MCF 10A (cell line): ENCODE measurements at regions of chr22 and their contacts with region 1.

Region 1: DNA sequence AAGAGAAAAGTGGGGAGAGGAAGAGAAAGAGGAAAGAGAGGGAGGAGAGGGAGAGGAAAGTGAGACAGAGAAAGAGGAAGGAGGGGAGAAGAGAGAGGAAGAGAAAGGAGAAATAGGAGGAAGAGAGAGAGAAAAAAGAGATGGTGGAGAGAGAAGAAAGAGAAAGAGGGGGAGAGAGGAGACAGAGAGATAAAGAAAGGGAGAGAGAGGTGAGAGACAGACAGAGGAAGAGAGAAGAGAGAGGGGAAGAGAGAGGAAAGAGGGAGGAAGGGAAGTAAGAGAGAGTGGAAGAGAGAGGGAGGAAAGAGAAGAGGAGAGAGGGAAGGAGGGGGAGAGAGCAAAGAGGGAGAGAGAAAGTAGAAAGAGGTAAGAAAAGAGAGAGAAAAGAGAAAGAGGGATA is 9.4 kb upstream of the SEZ6L start:
- DNase-seq: no peak
- H3K4me3 Mint-ChIP-seq: no peak overlapping the region
- H3K27ac Mint-ChIP-seq: no peak overlapping the region
- H3K4me1 Mint-ChIP-seq: no peaks in the 10 kb centered on the region
- H3K27me3 Mint-ChIP-seq: peaks cover 62% of the 10 kb centered on the region
- CTCF ChIP-seq: no peak

Region 2: GRCh38 chr22:25747245-25747944 is 412.5 kb before region 1 on chr22:
- CTCF ChIA-PET with region 1: no interaction called
- POLR2A ChIA-PET with region 1: no interaction called
- intact Hi-C with region 1: no loop called
- DNase-seq: peak; percentile 99
- H3K4me3 Mint-ChIP-seq: peak overlapping the region; percentile 40
- H3K27ac Mint-ChIP-seq: peak overlapping the region; percentile 76
- H3K4me1 Mint-ChIP-seq: peaks cover 43% of the 10 kb centered on the region
- H3K27me3 Mint-ChIP-seq: no peaks in the 10 kb centered on the region
- CTCF ChIP-seq: no peak

Region 3: DNA sequence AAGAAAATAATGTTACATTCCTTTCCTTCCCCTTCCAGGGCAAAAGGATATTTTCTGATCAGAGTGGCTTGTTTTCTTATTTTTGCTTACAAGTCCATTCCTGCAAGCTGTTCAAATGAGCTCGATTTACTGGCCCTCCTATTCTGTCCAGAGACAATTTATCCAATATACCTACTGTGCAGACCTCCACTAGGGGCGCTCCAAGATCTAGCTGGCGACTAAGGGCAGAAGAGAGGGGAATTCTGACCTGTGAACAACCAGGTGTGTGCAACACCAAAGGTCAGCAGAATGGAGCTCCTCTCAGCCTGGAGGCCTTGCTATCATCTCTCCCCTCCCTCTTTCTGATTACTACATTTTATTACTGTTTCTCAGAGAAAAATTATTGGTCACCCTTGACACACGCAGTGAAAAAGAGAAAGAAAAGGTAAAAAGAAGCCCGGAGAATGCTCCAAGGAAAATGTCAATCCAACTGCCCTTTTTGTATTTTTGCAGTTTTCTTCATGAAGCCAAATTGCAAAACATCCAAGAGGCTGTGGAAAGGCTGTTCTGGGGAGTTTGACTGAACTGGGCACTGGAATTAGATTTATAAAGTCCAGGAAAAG is 12.6 kb after region 1 on chr22:
- CTCF ChIA-PET with region 1: interaction called, 10 read pairs
- POLR2A ChIA-PET with region 1: no interaction called
- intact Hi-C with region 1: no loop called
- DNase-seq: peak; percentile 18
- H3K4me3 Mint-ChIP-seq: no peak overlapping the region
- H3K27ac Mint-ChIP-seq: no peak overlapping the region
- H3K4me1 Mint-ChIP-seq: no peaks in the 10 kb centered on the region
- H3K27me3 Mint-ChIP-seq: peaks cover 23% of the 10 kb centered on the region
- CTCF ChIP-seq: peak; percentile 54